HepG2 (cell line): ENCODE measurements at regions of chr16 and their contacts with region 1.

Region 1: GRCh38 chr16:19067349-19068236 is at the start of gene COQ7:
- DNase-seq: peak; percentile 100
- ATAC-seq: peak; percentile 93
- H3K4me3 ChIP-seq: peak within 1 kb of the TSS; percentile 66 to 87 (median 86)
- H3K27ac ChIP-seq: peak within 1 kb of the TSS; percentile 96
- H3K4me1 ChIP-seq: peaks cover 24% of the 10 kb centered on the region
- H3K27me3 ChIP-seq: no peaks in the 10 kb centered on the region; a peak in 1 of 5 replicates
- CTCF ChIP-seq: peak; percentile 19; the same call in 1 of the 2 replicates
- EP300 ChIP-seq: peak in 1 of 2 experiments; percentile 82; a peak in 1 of 4 replicates
- POLR2A ChIP-seq: peak; percentile 77 to 89
- RAD21 ChIP-seq: peak; percentile 71
- total RNA-seq, gene COQ7: 45.7 and 50.6 TPM in 2 replicates

Region 2: DNA sequence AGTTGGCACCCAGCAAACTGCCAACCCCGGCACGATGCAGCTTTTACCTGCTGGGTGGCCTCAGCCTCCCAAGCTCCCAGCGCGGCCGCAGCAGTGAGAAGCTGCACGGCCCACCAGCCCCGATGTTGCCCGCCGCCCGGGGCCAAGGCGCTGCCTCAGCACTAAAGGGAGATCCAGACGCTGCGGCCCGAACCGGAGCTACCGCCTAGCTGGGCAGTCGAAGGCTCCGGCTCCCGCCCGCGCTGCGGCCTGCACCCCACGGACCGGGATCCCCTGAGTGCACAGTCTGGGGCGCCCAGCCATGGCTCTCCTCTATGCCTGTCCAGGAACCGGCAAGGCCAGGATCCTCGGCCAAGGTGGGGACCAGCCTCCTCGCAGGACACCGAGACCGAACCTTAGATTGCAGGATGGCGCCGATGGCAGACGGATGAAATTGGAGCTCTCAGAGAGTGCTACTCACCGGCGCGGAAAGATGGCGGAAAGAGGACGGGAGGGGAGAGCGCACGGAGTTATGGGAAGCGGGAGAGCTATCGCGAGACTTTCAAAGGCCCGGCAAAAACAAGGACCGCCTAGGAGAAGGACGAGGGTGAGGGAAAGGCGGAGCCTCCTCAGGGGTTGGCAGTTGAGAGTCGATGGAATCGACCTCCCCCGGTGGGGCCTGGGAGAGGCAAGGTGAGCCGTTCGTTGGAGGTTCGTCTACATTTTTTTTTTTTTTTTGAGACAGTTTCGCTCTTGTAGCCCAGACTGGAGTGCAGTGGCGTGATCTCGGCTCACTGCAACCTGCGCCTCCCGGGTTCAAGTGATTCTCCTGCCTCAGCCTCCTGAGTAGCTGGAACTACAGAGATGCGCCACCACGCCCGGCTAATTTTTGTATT is 277.5 kb before region 1 on chr16 and contains the start of gene RPS15A:
- CTCF ChIA-PET with region 1: no interaction called
- POLR2A ChIA-PET with region 1: interaction called, 11 read pairs
- in situ Hi-C with region 1: no loop called
- intact Hi-C with region 1: no loop called
- DNase-seq: peak; percentile 100
- ATAC-seq: peak; percentile 96
- H3K4me3 ChIP-seq: peak within 1 kb of the TSS; percentile 74 to 98 (median 96)
- H3K27ac ChIP-seq: peak within 1 kb of the TSS; percentile 78
- H3K4me1 ChIP-seq: peaks cover 62% of the 10 kb centered on the region
- H3K27me3 ChIP-seq: peaks cover 0 to 7% of the 10 kb centered on the region in 2 experiments; a peak in 1 of 5 replicates
- CTCF ChIP-seq: peak; percentile 3; the same call in 1 of the 2 replicates
- EP300 ChIP-seq: peak in 1 of 2 experiments; percentile 38; a peak in 2 of 4 replicates
- POLR2A ChIP-seq: peak; percentile 96 to 99
- RAD21 ChIP-seq: peak; percentile 43; the same call in 1 of the 2 replicates
- total RNA-seq, gene RPS15A: 5,489 and 6,421 TPM in 2 replicates

Region 3: GRCh38 chr16:18983565-18984424 is 83.8 kb before region 1 on chr16 and contains the start of gene TMC7:
- CTCF ChIA-PET with region 1: interaction called, 172 read pairs
- POLR2A ChIA-PET with region 1: interaction called, 16 read pairs
- in situ Hi-C with region 1: loop called (anchors 5 kb)
- intact Hi-C with region 1: loop called (anchors 1 kb)
- DNase-seq: peak; percentile 91
- ATAC-seq: peak; percentile 99
- H3K4me3 ChIP-seq: peak within 1 kb of the TSS; percentile 60 to 85 (median 79)
- H3K27ac ChIP-seq: no peak within 1 kb of the TSS
- H3K4me1 ChIP-seq: peaks cover 44% of the 10 kb centered on the region
- H3K27me3 ChIP-seq: peaks cover 1 to 17% of the 10 kb centered on the region in 2 experiments; a peak in 4 of 5 replicates
- CTCF ChIP-seq: peak; percentile 99
- EP300 ChIP-seq: no peak
- POLR2A ChIP-seq: no peak
- RAD21 ChIP-seq: peak; percentile 100
- total RNA-seq, gene TMC7: 1.2 TPM in 2 replicates

Region 4: GRCh38 chr16:18999045-18999393 is 68.6 kb before region 1 on chr16:
- CTCF ChIA-PET with region 1: no interaction called
- POLR2A ChIA-PET with region 1: interaction called, 10 read pairs
- in situ Hi-C with region 1: no loop called
- intact Hi-C with region 1: no loop called
- DNase-seq: no peak
- ATAC-seq: peak; percentile 9
- H3K4me3 ChIP-seq: no peak overlapping the region
- H3K27ac ChIP-seq: no peak overlapping the region
- H3K4me1 ChIP-seq: peaks cover 65% of the 10 kb centered on the region
- H3K27me3 ChIP-seq: no peaks in the 10 kb centered on the region
- CTCF ChIP-seq: no peak
- EP300 ChIP-seq: no peak
- POLR2A ChIP-seq: 0 out of 4 replicates have a peak, but pooled peaks of 1 of the 2 experiments have one; percentile 0
- RAD21 ChIP-seq: no peak

Region 5: GRCh38 chr16:19005561-19006445 is 61.8 kb before region 1 on chr16:
- CTCF ChIA-PET with region 1: no interaction called
- POLR2A ChIA-PET with region 1: interaction called, 14 read pairs
- in situ Hi-C with region 1: no loop called
- intact Hi-C with region 1: no loop called
- DNase-seq: peak; percentile 100
- ATAC-seq: peak; percentile 97
- H3K4me3 ChIP-seq: peak overlapping the region in 1 of 3 experiments; percentile 35; a peak in 2 of 6 replicates
- H3K27ac ChIP-seq: peak overlapping the region; percentile 52
- H3K4me1 ChIP-seq: peaks cover 79% of the 10 kb centered on the region
- H3K27me3 ChIP-seq: no peaks in the 10 kb centered on the region
- CTCF ChIP-seq: peak; percentile 26
- EP300 ChIP-seq: peak; percentile 75 to 80; a peak in 3 of 4 replicates
- POLR2A ChIP-seq: peak; percentile 27 to 53; a peak in 3 of 4 replicates
- RAD21 ChIP-seq: no peak; the same call in 1 of the 2 replicates

Region 6: GRCh38 chr16:19094541-19095365 is 27.2 kb after region 1 on chr16:
- CTCF ChIA-PET with region 1: no interaction called
- POLR2A ChIA-PET with region 1: interaction called, 15 read pairs
- in situ Hi-C with region 1: no loop called
- intact Hi-C with region 1: no loop called
- DNase-seq: peak; percentile 88
- ATAC-seq: peak; percentile 83
- H3K4me3 ChIP-seq: peak overlapping the region in 1 of 3 experiments; percentile 3; a peak in 1 of 6 replicates
- H3K27ac ChIP-seq: no peak overlapping the region
- H3K4me1 ChIP-seq: peaks cover 40% of the 10 kb centered on the region
- H3K27me3 ChIP-seq: no peaks in the 10 kb centered on the region
- CTCF ChIP-seq: peak; percentile 45
- EP300 ChIP-seq: no peak
- POLR2A ChIP-seq: no peak
- RAD21 ChIP-seq: no peak

Region 7: GRCh38 chr16:19113453-19114351 is 46.1 kb after region 1 on chr16 and contains the start of gene ITPRIPL2:
- CTCF ChIA-PET with region 1: no interaction called
- POLR2A ChIA-PET with region 1: interaction called, 13 read pairs
- in situ Hi-C with region 1: no loop called
- intact Hi-C with region 1: no loop called
- DNase-seq: peak; percentile 67
- ATAC-seq: peak; percentile 78
- H3K4me3 ChIP-seq: peak within 1 kb of the TSS; percentile 73 to 88 (median 78)
- H3K27ac ChIP-seq: peak within 1 kb of the TSS; percentile 74
- H3K4me1 ChIP-seq: peaks cover 84% of the 10 kb centered on the region
- H3K27me3 ChIP-seq: no peaks in the 10 kb centered on the region
- CTCF ChIP-seq: no peak
- EP300 ChIP-seq: no peak
- POLR2A ChIP-seq: peak; percentile 77 to 79
- RAD21 ChIP-seq: peak; percentile 48
- total RNA-seq, gene ITPRIPL2: 11.7 and 12.6 TPM in 2 replicates